HepG2 (cell line): ENCODE measurements at regions of chr5 and their contacts with region 1.

Region 1: GRCh38 chr5:133081703-133082102 is 29.9 kb downstream of the HSPA4 start:
- DNase-seq: no peak
- ATAC-seq: no peak
- H3K4me3 ChIP-seq: no peak overlapping the region
- H3K27ac ChIP-seq: no peak overlapping the region
- H3K4me1 ChIP-seq: no peaks in the 10 kb centered on the region
- H3K27me3 ChIP-seq: no peaks in the 10 kb centered on the region
- CTCF ChIP-seq: no peak
- EP300 ChIP-seq: no peak
- POLR2A ChIP-seq: no peak
- RAD21 ChIP-seq: no peak

Region 2: DNA sequence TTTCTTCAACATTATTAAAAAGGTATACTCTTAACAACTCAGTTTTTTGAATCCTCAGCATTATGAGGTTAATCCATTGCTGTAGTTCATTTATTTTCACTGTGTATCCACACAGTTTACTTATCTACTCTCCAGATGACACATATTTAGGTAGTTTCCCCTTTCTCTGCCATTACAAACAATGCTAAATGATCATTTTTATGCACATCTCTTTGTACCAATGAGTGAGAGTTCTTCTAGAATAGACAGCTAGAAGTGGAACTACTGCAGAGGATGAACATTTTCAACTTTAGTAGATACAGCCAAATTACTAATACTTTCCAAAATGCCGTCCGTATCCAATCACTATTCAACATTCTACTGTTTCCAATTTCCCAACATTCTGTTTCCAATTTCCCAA is 129.8 kb before region 1 on chr5:
- CTCF ChIA-PET with region 1: no interaction called
- POLR2A ChIA-PET with region 1: no interaction called
- in situ Hi-C with region 1: loop called (anchors 10 kb)
- intact Hi-C with region 1: no loop called
- DNase-seq: no peak
- ATAC-seq: no peak
- H3K4me3 ChIP-seq: no peak overlapping the region
- H3K27ac ChIP-seq: no peak overlapping the region
- H3K4me1 ChIP-seq: peaks cover 41% of the 10 kb centered on the region
- H3K27me3 ChIP-seq: no peaks in the 10 kb centered on the region
- CTCF ChIP-seq: no peak
- EP300 ChIP-seq: no peak
- POLR2A ChIP-seq: no peak
- RAD21 ChIP-seq: no peak

Region 3: DNA sequence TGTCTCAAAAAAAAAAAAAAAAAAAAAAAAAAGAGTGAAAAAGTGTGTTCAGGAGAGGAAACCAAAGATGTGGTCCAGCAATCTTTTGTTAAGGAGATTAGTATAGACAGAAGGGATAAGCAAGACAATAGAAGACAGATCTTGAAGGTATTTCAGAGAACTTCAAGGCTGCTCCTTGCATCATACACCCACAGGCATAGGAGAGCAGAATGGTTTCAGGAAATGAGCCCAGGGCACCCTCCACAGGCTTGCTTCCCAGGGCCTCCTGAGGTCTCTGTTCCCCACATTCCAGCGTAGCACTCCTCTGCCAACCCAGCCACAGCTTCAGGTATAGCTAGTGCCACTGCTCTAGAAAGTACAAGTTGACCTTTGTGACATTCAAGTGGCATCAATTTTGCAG is 464.8 kb after region 1 on chr5:
- CTCF ChIA-PET with region 1: no interaction called
- POLR2A ChIA-PET with region 1: no interaction called
- in situ Hi-C with region 1: no loop called
- intact Hi-C with region 1: no loop called
- DNase-seq: no peak
- ATAC-seq: no peak
- H3K4me3 ChIP-seq: no peak overlapping the region
- H3K27ac ChIP-seq: no peak overlapping the region
- H3K4me1 ChIP-seq: no peaks in the 10 kb centered on the region
- H3K27me3 ChIP-seq: no peaks in the 10 kb centered on the region; a peak in 1 of 5 replicates
- CTCF ChIP-seq: no peak
- EP300 ChIP-seq: no peak
- POLR2A ChIP-seq: no peak
- RAD21 ChIP-seq: no peak